Natural killer cell (primary cell): ENCODE measurements at regions of chr20 and their contacts with region 1.

Region 1: DNA sequence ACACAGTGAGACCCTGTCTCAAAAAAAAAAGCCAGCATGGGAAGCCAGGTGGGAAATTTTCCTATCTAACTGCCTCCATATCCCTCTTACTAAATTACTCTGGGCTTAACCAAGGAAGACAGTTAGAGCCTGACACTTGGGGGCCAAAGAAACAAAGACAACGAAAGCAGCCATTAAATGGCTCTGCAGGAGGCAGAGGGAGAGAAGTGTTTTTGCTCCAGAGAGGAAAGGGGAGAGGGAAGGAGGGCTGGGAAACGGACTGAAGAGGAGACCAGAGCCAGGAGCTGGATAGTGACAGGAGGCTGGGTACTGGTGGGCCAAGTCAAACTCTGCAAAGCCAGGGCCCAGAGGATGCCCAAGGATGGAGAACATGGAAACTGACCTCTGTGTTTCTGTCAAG is 10.7 kb upstream of the TGIF2 start:
- DNase-seq: no peak
- ATAC-seq: no peak
- H3K4me3 ChIP-seq: no peak overlapping the region
- H3K4me3 Mint-ChIP-seq: no peak overlapping the region
- H3K27ac ChIP-seq: no peak overlapping the region
- H3K27ac Mint-ChIP-seq: peak overlapping the region; percentile 86 to 90
- H3K4me1 ChIP-seq: peaks cover 16% of the 10 kb centered on the region
- H3K4me1 Mint-ChIP-seq: peaks cover 19 to 20% of the 10 kb centered on the region in 2 donors
- H3K27me3 ChIP-seq: no peaks in the 10 kb centered on the region
- H3K27me3 Mint-ChIP-seq: no peaks in the 10 kb centered on the region
- CTCF ChIP-seq: no peak

Region 2: GRCh38 chr20:36628076-36628475 is 65.4 kb after region 1 on chr20:
- intact Hi-C with region 1: loop called (anchors 1 kb)
- DNase-seq: peak; percentile 61 to 81
- ATAC-seq: peak; percentile 73 to 88 (median 80)
- H3K4me3 ChIP-seq: no peak overlapping the region
- H3K4me3 Mint-ChIP-seq: peak overlapping the region; percentile 66
- H3K27ac ChIP-seq: peak overlapping the region; percentile 77
- H3K27ac Mint-ChIP-seq: peak overlapping the region; percentile 93 to 95
- H3K4me1 ChIP-seq: peaks cover 50% of the 10 kb centered on the region
- H3K4me1 Mint-ChIP-seq: peaks cover 51 to 63% of the 10 kb centered on the region in 2 donors
- H3K27me3 ChIP-seq: no peaks in the 10 kb centered on the region
- H3K27me3 Mint-ChIP-seq: no peaks in the 10 kb centered on the region
- CTCF ChIP-seq: no peak

Region 3: DNA sequence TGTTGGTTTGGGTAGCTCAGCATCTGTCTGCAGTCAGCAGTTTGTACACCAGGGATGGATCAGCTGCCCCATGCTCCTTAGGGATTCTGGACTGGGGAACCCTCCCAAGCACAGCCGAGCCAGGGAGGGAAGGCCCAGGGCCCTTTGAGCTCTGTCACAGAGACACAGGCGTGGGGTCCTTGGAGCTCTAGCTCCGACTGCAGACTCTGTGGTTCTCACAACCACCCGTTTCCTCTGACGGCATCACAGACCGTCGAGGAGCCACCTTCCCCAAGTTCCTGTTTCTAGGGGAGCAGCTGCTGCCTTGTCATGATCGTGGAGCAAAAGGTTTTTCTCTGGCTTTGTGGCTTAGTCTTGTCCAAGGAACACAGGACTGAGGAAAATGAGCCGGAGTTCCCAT is 83.3 kb after region 1 on chr20 and contains the start of gene SLA2:
- intact Hi-C with region 1: no loop called
- DNase-seq: peak; percentile 70 to 88
- ATAC-seq: peak; percentile 76 to 90 (median 86)
- H3K4me3 ChIP-seq: peak within 1 kb of the TSS; percentile 54
- H3K4me3 Mint-ChIP-seq: peak within 1 kb of the TSS; percentile 95
- H3K27ac ChIP-seq: peak within 1 kb of the TSS; percentile 85
- H3K27ac Mint-ChIP-seq: peak within 1 kb of the TSS; percentile 97 to 98
- H3K4me1 ChIP-seq: peaks cover 57% of the 10 kb centered on the region
- H3K4me1 Mint-ChIP-seq: peaks cover 56 to 59% of the 10 kb centered on the region in 2 donors
- H3K27me3 ChIP-seq: no peaks in the 10 kb centered on the region
- H3K27me3 Mint-ChIP-seq: no peaks in the 10 kb centered on the region
- CTCF ChIP-seq: no peak
- total RNA-seq, gene SLA2: 77.0 to 116 (median 90.3) TPM